H1 (cell line): ENCODE measurements at regions of chr9 and their contacts with region 1.

Region 1: DNA sequence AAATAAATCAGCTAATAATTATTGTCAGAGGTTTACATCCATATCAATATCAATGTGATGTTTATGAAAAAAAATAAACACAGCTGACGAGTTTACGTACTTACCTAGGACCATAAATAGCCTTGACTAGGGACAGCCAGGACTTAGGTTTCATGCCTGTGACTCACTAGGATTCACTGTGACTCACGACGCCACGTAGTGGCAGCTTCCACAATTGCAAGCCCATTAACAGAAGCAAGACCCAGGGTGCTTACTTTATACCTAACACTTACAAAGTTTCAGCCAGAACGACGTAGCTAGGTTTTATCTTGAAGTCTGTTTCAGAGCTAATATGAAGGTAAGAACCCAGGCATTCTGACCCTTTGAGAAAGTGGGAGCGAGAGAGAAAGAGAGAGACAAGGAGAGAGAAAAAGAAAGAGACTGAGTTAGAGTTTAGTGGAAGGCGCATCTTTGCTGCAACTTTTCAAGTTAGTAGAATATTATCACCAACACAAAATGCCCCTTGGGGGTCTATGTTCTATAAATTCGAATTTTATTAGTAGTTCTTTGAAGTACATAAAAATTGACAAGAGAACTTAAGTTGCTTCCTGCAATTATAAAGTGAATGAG is 191.2 kb downstream of the GNA14 start:
- DNase-seq: peak; percentile 79 to 92
- H3K4me3 ChIP-seq: no peak overlapping the region
- H3K27ac ChIP-seq: no peak overlapping the region
- H3K4me1 ChIP-seq: peaks cover 0 to 6% (median 2%) of the 10 kb centered on the region in 4 experiments; a peak in 4 of 7 replicates
- H3K27me3 ChIP-seq: no peaks in the 10 kb centered on the region
- CTCF ChIP-seq: peak; percentile 78 to 94 (median 84)
- EP300 ChIP-seq: no peak
- POLR2A ChIP-seq: no peak
- RAD21 ChIP-seq: peak; percentile 58 to 68

Region 2: DNA sequence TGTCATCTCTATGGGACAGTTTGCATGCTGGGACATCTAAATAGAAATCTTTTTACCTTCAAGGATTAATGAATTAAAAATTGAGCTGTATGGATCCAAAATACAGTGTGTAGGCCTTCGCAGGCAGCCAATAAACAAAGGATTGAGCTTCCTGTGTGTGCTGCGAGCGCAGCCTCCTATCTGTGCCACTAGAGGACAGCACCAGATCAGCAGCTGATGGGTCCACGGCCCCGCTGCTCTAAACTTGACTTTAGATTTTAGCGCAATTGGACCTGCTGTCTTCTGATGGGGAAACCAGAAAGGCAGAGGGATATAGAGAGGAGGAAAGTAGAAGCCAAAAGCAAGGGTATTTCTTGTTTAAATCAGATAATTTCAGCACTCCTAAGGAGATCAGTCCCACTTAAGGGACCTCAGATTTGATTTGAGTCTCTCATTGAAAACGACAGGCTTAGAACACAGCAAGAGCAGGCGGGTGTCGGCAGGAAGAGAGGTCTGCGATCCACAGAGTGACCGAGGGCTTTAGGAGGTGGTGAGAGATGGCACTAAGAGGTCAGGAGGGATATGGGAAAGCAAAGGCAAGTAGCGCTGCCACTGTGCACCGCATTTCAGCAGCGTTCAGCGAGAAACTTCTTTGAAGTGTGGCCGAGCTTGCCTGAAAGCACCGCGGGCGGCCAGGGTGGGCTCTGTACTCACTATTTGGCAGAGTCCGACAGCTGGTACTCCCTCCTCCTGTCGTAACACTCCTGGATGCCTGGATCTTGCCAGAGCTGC is 23.1 kb before region 1 on chr9:
- CTCF ChIA-PET with region 1: interaction called, 384 read pairs
- POLR2A ChIA-PET with region 1: interaction called, 3 read pairs
- DNase-seq: no peak
- H3K4me3 ChIP-seq: no peak overlapping the region
- H3K27ac ChIP-seq: no peak overlapping the region
- H3K4me1 ChIP-seq: no peaks in the 10 kb centered on the region
- H3K27me3 ChIP-seq: no peaks in the 10 kb centered on the region
- CTCF ChIP-seq: peak; percentile 92 to 99 (median 99)
- EP300 ChIP-seq: no peak
- POLR2A ChIP-seq: no peak
- RAD21 ChIP-seq: peak; percentile 98

Region 3: DNA sequence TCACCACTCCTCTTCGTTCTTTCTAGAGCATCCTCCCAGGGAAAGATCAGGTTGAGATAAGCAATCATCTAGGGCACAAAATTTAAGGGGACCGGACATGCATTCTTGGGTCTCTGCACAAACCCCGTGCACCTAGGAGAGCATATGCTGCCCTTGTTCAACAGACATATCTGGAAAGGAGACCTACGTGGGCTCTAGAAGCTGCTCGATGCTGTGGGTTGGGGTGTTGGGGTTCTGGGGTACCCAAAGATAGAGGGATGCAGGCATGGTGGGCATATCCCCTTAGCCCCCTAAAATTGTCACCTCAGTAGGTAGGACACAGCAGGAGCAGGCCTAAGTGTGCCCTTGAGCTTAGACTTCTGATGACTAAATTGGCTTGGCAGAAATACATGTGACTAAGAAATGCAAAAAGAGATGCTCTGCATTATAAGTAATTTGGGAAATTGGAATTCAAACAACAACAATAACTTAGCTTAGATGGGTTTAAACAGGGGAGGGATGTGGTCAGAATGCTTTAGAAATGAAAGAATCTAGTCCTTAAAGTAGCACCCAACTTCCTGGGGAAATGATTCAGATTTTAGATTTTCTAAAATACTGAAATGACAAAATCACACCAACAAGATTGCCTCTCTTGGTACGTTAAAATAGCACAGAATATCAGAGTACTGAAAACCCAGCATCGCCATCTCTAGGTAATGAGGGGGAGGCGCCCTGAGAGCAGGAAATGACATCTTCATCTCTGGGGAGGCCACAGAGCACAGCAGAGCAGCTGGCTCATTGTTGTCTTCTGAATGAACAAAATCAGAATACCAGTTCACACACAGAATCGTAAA is 18.9 kb after region 1 on chr9:
- CTCF ChIA-PET with region 1: interaction called, 72 read pairs
- POLR2A ChIA-PET with region 1: no interaction called
- DNase-seq: no peak
- H3K4me3 ChIP-seq: no peak overlapping the region
- H3K27ac ChIP-seq: no peak overlapping the region
- H3K4me1 ChIP-seq: no peaks in the 10 kb centered on the region
- H3K27me3 ChIP-seq: no peaks in the 10 kb centered on the region
- CTCF ChIP-seq: peak in 1 of 3 experiments; percentile 14; a peak in 1 of 4 replicates
- EP300 ChIP-seq: no peak
- POLR2A ChIP-seq: no peak
- RAD21 ChIP-seq: no peak

Region 4: GRCh38 chr9:77531400-77531799 is 74.5 kb after region 1 on chr9:
- CTCF ChIA-PET with region 1: interaction called, 10 read pairs
- POLR2A ChIA-PET with region 1: no interaction called
- DNase-seq: no peak
- H3K4me3 ChIP-seq: no peak overlapping the region
- H3K27ac ChIP-seq: no peak overlapping the region
- H3K4me1 ChIP-seq: peaks cover 3 to 14% (median 9%) of the 10 kb centered on the region in 4 experiments
- H3K27me3 ChIP-seq: no peaks in the 10 kb centered on the region
- CTCF ChIP-seq: no peak
- EP300 ChIP-seq: no peak
- POLR2A ChIP-seq: no peak
- RAD21 ChIP-seq: no peak

Region 5: DNA sequence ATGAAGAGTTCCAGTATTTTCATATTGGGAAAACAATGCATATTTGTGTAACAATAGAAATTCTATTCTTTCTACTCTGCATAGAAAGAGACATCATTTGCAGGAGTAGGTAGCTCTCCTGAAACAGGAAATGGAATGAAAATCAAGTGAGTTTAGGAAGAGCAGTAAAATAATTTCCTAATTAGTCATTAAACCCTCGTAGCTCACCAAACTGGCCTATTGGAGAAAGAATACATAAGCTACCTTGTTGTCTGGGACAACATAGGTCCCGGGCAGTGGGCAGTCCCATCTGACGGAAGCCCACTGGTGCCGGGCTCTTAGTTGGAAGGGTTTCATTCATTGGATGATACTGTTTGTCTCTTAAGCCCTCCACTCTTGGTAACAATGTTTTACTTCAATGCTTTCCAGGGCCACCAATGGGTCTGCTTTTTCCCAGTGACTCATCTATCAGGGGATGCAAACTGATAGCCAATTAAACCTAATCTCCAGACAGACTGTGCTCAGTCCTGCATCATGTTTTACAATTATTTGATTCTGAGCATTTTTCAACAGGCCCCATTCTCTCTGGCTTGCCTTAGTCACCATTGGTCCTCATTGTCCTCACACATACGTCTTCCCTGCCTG is 144.7 kb after region 1 on chr9:
- CTCF ChIA-PET with region 1: no interaction called
- POLR2A ChIA-PET with region 1: no interaction called
- DNase-seq: no peak
- H3K4me3 ChIP-seq: no peak overlapping the region
- H3K27ac ChIP-seq: no peak overlapping the region
- H3K4me1 ChIP-seq: peaks cover 0 to 16% (median 1%) of the 10 kb centered on the region in 4 experiments; a peak in 5 of 7 replicates
- H3K27me3 ChIP-seq: no peaks in the 10 kb centered on the region
- CTCF ChIP-seq: no peak
- EP300 ChIP-seq: no peak
- POLR2A ChIP-seq: no peak
- RAD21 ChIP-seq: no peak

Region 6: GRCh38 chr9:77648234-77649120 is 191.5 kb after region 1 on chr9 and contains the start of gene GNA14:
- CTCF ChIA-PET with region 1: interaction called, 102 read pairs
- POLR2A ChIA-PET with region 1: interaction called, 3 read pairs
- DNase-seq: peak in 1 of 2 experiments; percentile 85
- H3K4me3 ChIP-seq: peak within 1 kb of the TSS; percentile 47 to 79 (median 75)
- H3K27ac ChIP-seq: no peak within 1 kb of the TSS
- H3K4me1 ChIP-seq: peaks cover 0 to 17% (median 4%) of the 10 kb centered on the region in 4 experiments; a peak in 6 of 7 replicates
- H3K27me3 ChIP-seq: peaks cover 6 to 32% (median 21%) of the 10 kb centered on the region in 4 experiments
- CTCF ChIP-seq: peak; percentile 26 to 36 (median 27)
- EP300 ChIP-seq: no peak
- POLR2A ChIP-seq: no peak
- RAD21 ChIP-seq: peak; percentile 48 to 54
- total RNA-seq, gene GNA14: 3.2 and 3.4 TPM in 2 replicates

Region 7: GRCh38 chr9:77738932-77739331 is 282.0 kb after region 1 on chr9:
- CTCF ChIA-PET with region 1: interaction called, 14 read pairs
- POLR2A ChIA-PET with region 1: no interaction called
- DNase-seq: no peak
- H3K4me3 ChIP-seq: no peak overlapping the region
- H3K27ac ChIP-seq: no peak overlapping the region
- H3K4me1 ChIP-seq: peaks cover 1 to 12% (median 8%) of the 10 kb centered on the region in 4 experiments; a peak in 4 of 7 replicates
- H3K27me3 ChIP-seq: no peaks in the 10 kb centered on the region; a peak in 1 of 7 replicates
- CTCF ChIP-seq: no peak
- EP300 ChIP-seq: no peak
- POLR2A ChIP-seq: no peak
- RAD21 ChIP-seq: no peak

Region 8: GRCh38 chr9:77769246-77769645 is 312.3 kb after region 1 on chr9:
- CTCF ChIA-PET with region 1: interaction called, 22 read pairs
- POLR2A ChIA-PET with region 1: no interaction called
- DNase-seq: no peak
- H3K4me3 ChIP-seq: no peak overlapping the region
- H3K27ac ChIP-seq: no peak overlapping the region
- H3K4me1 ChIP-seq: no peaks in the 10 kb centered on the region
- H3K27me3 ChIP-seq: no peaks in the 10 kb centered on the region
- CTCF ChIP-seq: no peak
- EP300 ChIP-seq: no peak
- POLR2A ChIP-seq: no peak
- RAD21 ChIP-seq: no peak